ENCODE measurements at regions of chr11 and their contacts with region 1.

Region 1: DNA sequence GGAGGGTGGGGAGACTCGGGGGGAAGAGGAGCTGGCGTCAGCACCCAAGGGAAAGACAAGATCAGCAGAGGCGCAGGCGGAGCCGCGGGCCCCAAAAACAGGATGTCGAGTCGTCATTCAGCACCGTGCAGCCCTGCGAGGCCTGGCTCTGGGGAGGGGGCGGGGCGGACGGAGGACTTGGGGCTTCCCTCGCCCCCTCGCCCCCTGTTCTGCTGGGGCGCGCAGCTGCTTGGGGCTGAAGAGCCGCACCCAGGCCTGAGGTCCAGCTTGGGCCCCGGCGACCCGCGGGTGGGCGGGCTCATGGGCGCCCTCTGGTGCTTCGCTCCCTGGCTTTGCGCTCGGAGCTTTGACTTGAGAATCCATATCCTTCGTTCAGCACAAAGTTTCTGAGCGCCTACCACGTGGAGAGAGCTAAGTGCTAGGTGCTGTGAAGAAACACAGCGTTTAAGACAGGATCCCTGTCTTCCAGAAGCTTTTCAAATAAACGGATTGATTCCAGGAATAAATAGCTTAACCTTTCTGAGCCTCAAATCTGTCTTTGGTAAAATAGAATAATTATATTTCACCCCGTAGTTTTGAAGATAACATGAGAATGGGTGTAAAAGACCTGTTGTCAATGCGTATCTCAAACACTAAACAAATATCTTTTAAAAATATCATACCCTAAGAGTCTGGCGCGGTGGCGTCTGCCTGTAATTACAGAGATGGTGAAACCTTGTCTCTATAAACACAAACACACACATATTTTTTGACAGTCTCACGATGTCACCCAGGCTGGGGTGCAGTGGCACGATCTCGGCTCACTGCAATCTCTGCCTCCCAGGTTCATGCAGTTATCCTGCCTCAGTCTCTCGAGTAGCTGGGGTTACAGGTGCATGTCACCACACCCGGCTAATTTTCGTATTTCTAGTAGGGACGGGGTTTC is 929 bp upstream of the RHOG start:
- DNase-seq: peak; percentile 85 to 98 (median 92)
- ATAC-seq: peak; percentile 72
- H3K4me3 ChIP-seq: peak overlapping the region; percentile 95
- H3K4me3 Mint-ChIP-seq: peak overlapping the region; percentile 97
- H3K27ac ChIP-seq: peak overlapping the region; percentile 95 to 97
- H3K27ac Mint-ChIP-seq: peak overlapping the region; percentile 95
- H3K4me1 ChIP-seq: peaks cover 40% of the 10 kb centered on the region
- H3K4me1 Mint-ChIP-seq: peaks cover 61% of the 10 kb centered on the region
- H3K27me3 ChIP-seq: no peaks in the 10 kb centered on the region
- H3K27me3 Mint-ChIP-seq: no peaks in the 10 kb centered on the region
- CTCF ChIP-seq: peak; percentile 92

Region 2: GRCh38 chr11:3626308-3626951 is 215.3 kb before region 1 on chr11:
- CTCF ChIA-PET with region 1: no interaction called
- POLR2A ChIA-PET with region 1: no interaction called
- intact Hi-C with region 1: no loop called
- DNase-seq: peak in 4 of 14 experiments; percentile 2 to 46 (median 24)
- ATAC-seq: no peak
- H3K4me3 ChIP-seq: no peak overlapping the region
- H3K4me3 Mint-ChIP-seq: no peak overlapping the region
- H3K27ac ChIP-seq: no peak overlapping the region
- H3K27ac Mint-ChIP-seq: no peak overlapping the region
- H3K4me1 ChIP-seq: no peaks in the 10 kb centered on the region
- H3K4me1 Mint-ChIP-seq: peaks cover 10% of the 10 kb centered on the region
- H3K27me3 ChIP-seq: no peaks in the 10 kb centered on the region
- H3K27me3 Mint-ChIP-seq: no peaks in the 10 kb centered on the region
- CTCF ChIP-seq: no peak

Region 3: DNA sequence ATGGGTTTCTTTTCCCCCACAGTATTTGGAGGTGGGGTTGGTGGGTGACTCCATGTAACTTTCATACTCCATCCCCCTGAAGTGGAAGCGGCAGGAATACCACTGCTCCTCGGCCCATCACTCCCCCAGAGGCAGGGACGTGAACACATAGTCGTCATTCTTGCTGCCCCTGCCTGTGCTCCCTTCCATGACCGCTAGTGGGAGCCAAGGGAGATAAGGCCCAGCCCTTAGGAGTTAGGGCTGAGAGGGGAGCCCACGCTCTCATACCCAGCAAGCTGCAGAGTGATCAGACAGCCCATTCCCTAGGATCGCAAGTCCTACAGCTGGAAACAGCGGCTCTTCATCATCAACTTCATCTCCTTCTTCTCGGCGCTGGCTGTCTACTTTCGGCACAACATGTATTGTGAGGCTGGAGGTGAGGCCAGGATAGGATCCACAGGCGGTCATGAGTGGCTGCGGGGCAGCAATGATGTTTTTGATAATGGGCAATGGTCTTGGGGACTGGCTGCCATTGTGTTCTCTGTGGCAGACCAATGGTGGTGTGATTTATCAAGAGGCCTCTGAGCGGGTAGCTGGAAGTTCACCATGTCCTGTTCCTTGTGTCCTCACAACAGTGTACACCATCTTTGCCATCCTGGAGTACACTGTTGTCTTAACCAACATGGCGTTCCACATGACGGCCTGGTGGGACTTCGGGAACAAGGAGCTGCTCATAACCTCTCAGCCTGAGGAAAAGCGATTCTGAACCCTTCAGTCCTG is 16.8 kb before region 1 on chr11:
- CTCF ChIA-PET with region 1: interaction called, 10 read pairs
- POLR2A ChIA-PET with region 1: interaction called, 16 read pairs
- intact Hi-C with region 1: loop called (anchors 2 kb)
- DNase-seq: peak; percentile 69 to 90 (median 80)
- ATAC-seq: peak; percentile 100
- H3K4me3 ChIP-seq: no peak overlapping the region
- H3K4me3 Mint-ChIP-seq: no peak overlapping the region
- H3K27ac ChIP-seq: peak overlapping the region in 1 of 2 donors; percentile 10
- H3K27ac Mint-ChIP-seq: peak overlapping the region; percentile 77
- H3K4me1 ChIP-seq: peaks cover 30% of the 10 kb centered on the region
- H3K4me1 Mint-ChIP-seq: peaks cover 38% of the 10 kb centered on the region
- H3K27me3 ChIP-seq: no peaks in the 10 kb centered on the region
- H3K27me3 Mint-ChIP-seq: no peaks in the 10 kb centered on the region
- CTCF ChIP-seq: peak; percentile 75

Region 4: GRCh38 chr11:3880724-3881123 is 39.0 kb after region 1 on chr11:
- CTCF ChIA-PET with region 1: interaction called, 4 read pairs
- POLR2A ChIA-PET with region 1: interaction called, 11 read pairs
- intact Hi-C with region 1: loop called in 1 of 2 experiments (anchors 5 kb)
- DNase-seq: no peak
- ATAC-seq: no peak
- H3K4me3 ChIP-seq: no peak overlapping the region
- H3K4me3 Mint-ChIP-seq: no peak overlapping the region
- H3K27ac ChIP-seq: no peak overlapping the region
- H3K27ac Mint-ChIP-seq: peak overlapping the region; percentile 60
- H3K4me1 ChIP-seq: peaks cover 38% of the 10 kb centered on the region
- H3K4me1 Mint-ChIP-seq: peaks cover 80% of the 10 kb centered on the region
- H3K27me3 ChIP-seq: no peaks in the 10 kb centered on the region
- H3K27me3 Mint-ChIP-seq: no peaks in the 10 kb centered on the region
- CTCF ChIP-seq: no peak

Region 5: GRCh38 chr11:3920148-3920852 is 78.6 kb after region 1 on chr11:
- CTCF ChIA-PET with region 1: no interaction called
- POLR2A ChIA-PET with region 1: no interaction called
- intact Hi-C with region 1: no loop called
- DNase-seq: peak in 13 of 14 experiments; percentile 44 to 85 (median 63)
- ATAC-seq: peak; percentile 80
- H3K4me3 ChIP-seq: no peak overlapping the region
- H3K4me3 Mint-ChIP-seq: peak overlapping the region; percentile 48
- H3K27ac ChIP-seq: peak overlapping the region in 1 of 2 donors; percentile 15
- H3K27ac Mint-ChIP-seq: peak overlapping the region; percentile 70
- H3K4me1 ChIP-seq: peaks cover 50% of the 10 kb centered on the region
- H3K4me1 Mint-ChIP-seq: peaks cover 70% of the 10 kb centered on the region
- H3K27me3 ChIP-seq: no peaks in the 10 kb centered on the region
- H3K27me3 Mint-ChIP-seq: no peaks in the 10 kb centered on the region
- CTCF ChIP-seq: no peak

Region 6: DNA sequence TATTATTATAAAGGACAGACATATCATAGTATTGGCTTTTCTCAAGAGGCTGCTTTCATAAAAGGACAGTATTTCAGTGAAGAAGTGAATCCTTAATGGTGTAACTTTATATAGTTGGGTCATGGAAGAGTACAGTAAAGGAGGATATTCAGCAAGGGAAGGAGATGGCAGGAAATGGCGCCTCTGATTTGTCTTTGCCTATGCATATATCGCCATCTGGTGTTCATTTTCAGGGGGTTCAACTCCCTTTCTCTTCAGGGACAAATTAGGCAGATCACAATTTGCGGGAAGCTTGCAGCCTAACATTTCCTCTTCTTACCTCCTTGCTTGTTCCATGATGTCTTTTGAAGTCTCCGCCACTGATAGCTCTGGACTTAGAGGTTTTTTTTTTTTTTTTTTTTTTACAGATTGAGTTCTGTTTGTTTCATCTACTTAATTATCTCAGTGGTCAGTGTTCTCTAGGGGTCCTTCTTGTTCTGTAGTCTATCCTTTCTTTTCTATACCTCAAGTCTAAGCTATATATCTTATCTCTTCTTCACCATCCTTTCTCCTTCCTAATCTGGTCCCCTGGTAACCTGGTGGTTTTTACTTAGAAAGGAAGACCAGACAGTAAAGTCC is 231.1 kb after region 1 on chr11:
- CTCF ChIA-PET with region 1: interaction called, 13 read pairs
- POLR2A ChIA-PET with region 1: interaction called, 17 read pairs
- intact Hi-C with region 1: no loop called
- DNase-seq: peak in 9 of 14 experiments; percentile 19 to 87 (median 48)
- ATAC-seq: peak; percentile 78
- H3K4me3 ChIP-seq: no peak overlapping the region
- H3K4me3 Mint-ChIP-seq: no peak overlapping the region
- H3K27ac ChIP-seq: no peak overlapping the region
- H3K27ac Mint-ChIP-seq: peak overlapping the region; percentile 69
- H3K4me1 ChIP-seq: peaks cover 27% of the 10 kb centered on the region
- H3K4me1 Mint-ChIP-seq: peaks cover 84% of the 10 kb centered on the region
- H3K27me3 ChIP-seq: no peaks in the 10 kb centered on the region
- H3K27me3 Mint-ChIP-seq: no peaks in the 10 kb centered on the region
- CTCF ChIP-seq: peak; percentile 80

Region 7: DNA sequence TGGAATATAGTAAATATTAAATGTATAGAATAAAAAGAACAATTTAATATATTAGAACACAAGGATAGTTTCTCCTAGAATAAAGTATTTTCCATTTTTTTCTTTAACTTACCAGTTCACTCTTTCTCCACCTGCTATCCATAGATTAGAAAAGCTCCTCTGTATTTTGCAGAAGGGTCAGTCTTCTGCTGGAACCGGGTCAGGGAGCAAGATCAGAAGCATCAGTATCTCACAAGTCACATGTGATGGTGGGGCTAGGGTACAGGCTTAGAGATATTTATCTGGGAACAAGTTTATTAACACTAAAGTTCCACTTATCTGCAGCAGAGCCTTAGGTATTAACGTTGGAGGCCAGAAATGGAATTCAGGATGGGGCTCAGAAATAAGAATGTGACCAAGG is 1330.2 kb after region 1 on chr11:
- CTCF ChIA-PET with region 1: no interaction called
- POLR2A ChIA-PET with region 1: no interaction called
- intact Hi-C with region 1: no loop called
- DNase-seq: no peak
- ATAC-seq: no peak
- H3K4me3 ChIP-seq: no peak overlapping the region
- H3K4me3 Mint-ChIP-seq: no peak overlapping the region
- H3K27ac ChIP-seq: no peak overlapping the region
- H3K27ac Mint-ChIP-seq: no peak overlapping the region
- H3K4me1 ChIP-seq: no peaks in the 10 kb centered on the region
- H3K4me1 Mint-ChIP-seq: no peaks in the 10 kb centered on the region
- H3K27me3 ChIP-seq: no peaks in the 10 kb centered on the region
- H3K27me3 Mint-ChIP-seq: no peaks in the 10 kb centered on the region
- CTCF ChIP-seq: no peak